HCT116 (cell line): ENCODE measurements at regions of chr1 and their contacts with region 1.

Region 1: DNA sequence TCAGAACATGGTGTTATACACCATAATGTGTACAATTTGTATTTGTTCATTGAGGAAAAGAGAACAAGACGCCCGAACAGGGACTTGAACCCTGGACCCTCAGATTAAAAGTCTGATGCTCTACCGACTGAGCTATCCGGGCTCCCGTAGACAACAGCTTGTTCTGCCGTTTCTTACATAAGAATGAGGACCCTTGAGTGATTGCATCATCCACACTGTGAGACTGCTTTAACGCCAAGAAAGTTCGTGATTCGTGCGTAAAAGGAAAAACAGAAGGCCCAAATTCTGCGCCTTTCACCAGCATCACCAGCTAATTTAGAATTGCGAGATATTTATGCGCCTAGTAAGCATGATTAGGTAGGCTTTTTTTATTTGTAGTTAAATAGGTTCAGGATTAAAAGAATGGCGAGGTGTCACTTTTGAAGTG is 9.2 kb upstream of the MDM4 start:
- DNase-seq: peak; percentile 87
- ATAC-seq: peak; percentile 82
- H3K4me3 ChIP-seq: peak overlapping the region; percentile 7 to 38; a peak in 3 of 4 replicates
- H3K27ac ChIP-seq: peak overlapping the region; percentile 60
- H3K4me1 ChIP-seq: peaks cover 30 to 47% of the 10 kb centered on the region in 2 experiments
- H3K27me3 ChIP-seq: no peaks in the 10 kb centered on the region
- CTCF ChIP-seq: no peak
- POLR2A ChIP-seq: no peak
- RAD21 ChIP-seq: no peak

Region 2: DNA sequence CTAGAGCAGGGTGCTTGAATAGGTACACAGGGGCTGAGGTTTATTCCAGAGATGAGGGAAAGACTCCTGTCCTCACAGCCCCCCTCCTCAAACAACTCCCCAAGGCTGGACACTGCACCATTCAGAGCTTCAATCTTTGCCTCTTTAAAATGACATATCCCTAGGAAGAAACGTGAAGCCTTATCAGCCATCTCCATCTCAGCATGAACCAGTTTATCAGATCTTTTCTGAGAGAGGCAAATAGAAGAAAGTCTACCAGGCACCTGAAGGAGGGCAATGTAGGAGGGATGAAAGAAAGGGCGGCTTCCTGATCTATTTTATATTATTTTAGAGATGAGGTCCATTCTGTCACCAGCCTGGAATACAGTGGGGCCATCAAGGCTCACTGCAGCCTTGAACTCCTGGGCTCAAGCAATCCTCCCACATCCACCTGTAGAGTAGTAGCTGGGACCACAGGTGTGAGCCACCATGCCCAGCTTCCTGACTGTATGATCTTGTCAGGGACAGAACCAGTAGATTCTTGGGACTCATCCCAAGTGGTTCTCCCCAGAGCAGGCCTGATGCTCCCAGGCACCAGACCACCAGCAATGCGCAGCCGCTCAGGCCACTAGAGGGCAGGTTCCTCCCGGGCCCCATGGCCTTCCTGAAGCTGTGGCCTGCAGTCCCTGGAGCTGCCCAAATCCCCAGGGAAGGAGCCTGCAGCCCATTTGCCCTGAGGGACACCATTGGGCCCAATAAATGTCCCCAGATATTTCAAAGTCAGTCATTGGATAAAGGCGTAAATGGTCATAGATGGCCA is 248.8 kb before region 1 on chr1:
- CTCF ChIA-PET with region 1: interaction called, 6 read pairs
- POLR2A ChIA-PET with region 1: no interaction called
- RAD21 ChIA-PET with region 1: no interaction called
- intact Hi-C with region 1: loop called (anchors 1 kb)
- DNase-seq: peak; percentile 37
- ATAC-seq: peak; percentile 97
- H3K4me3 ChIP-seq: no peak overlapping the region
- H3K27ac ChIP-seq: no peak overlapping the region
- H3K4me1 ChIP-seq: no peaks in the 10 kb centered on the region
- H3K27me3 ChIP-seq: no peaks in the 10 kb centered on the region
- CTCF ChIP-seq: peak; percentile 85 to 93 (median 91)
- POLR2A ChIP-seq: no peak
- RAD21 ChIP-seq: peak; percentile 88

Region 3: DNA sequence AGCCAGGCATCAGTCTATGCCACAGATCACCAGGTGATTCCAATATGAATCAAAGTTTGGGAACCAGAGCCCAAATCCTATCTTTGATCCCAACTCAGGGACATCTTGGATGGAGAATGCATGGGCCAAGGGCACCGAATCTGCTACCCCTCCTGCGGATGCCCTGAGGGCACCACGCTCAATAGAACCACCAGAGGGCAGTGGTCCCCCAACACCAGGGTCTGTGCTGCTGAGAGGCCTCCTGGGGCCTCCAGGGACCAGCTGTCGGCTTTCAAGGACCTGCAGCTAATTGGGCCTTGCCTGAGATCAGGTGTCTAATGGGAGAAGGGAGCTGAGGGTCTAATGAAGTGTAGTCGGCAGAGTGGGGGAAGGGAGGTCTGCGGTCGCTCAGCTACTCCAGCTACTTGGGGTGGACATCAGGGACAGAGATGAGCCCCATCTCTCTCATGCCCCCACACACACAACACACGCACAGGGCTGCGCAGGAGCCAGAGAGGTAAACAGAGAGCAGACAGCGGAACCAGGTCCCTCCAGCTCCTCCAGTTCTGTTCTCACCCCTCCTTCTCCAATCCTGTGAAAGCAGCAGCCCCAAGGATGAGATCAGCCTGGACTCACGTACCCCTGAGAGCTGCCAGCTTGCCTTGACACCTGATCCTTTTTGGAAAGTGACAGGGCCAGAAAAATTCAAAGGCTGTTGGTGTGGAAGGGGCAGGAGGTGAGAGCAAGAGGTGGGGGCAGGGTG is 60.4 kb before region 1 on chr1:
- CTCF ChIA-PET with region 1: interaction called, 33 read pairs
- POLR2A ChIA-PET with region 1: no interaction called
- RAD21 ChIA-PET with region 1: interaction called, 5 to 7 read pairs
- intact Hi-C with region 1: loop called (anchors 1 kb)
- DNase-seq: no peak
- ATAC-seq: peak; percentile 87
- H3K4me3 ChIP-seq: no peak overlapping the region
- H3K27ac ChIP-seq: no peak overlapping the region
- H3K4me1 ChIP-seq: peaks cover 17 to 45% of the 10 kb centered on the region in 2 experiments
- H3K27me3 ChIP-seq: no peaks in the 10 kb centered on the region
- CTCF ChIP-seq: peak; percentile 70 to 87 (median 76)
- POLR2A ChIP-seq: no peak
- RAD21 ChIP-seq: peak; percentile 88

Region 4: DNA sequence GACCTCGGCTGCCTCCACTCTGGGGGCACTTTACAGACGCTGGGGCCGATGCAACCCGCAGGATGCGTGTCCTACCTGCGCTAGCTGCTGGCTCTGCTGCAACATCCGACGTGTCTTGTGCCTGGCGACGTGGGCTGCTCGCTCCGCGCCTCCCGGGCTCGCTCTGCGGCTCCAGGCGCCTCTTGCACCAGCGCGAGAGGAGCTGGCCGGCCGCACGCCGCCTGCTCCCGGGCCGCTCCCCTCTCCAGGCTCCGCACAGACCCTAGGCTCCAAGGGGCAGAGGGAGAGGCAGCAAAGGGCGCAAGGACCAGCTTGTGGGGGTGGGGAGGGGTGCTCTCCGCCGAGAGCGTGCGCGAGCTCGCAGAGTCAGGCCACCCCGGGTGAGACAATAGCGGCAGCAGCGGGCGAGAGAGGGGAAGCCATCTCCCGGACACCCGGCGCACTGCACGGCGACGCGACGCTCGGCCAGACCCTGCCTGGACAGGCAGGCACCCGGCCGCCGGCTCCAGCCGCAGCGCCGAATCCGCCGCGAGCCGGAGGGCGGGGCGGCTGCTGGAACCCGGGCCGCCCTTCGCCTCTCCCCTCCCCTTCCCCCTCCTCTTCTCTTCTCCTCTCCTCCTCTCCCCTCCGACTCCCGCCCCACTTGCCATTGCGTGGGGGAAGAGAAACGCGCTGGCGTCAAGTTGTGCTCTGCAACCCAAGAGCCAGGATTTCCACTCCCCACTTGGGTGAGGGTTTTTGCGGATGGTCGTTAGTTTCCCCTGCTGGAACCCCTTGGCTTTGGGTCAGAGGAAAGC is 12.5 kb before region 1 on chr1 and contains the start of gene PIK3C2B:
- CTCF ChIA-PET with region 1: interaction called, 17 read pairs
- POLR2A ChIA-PET with region 1: interaction called, 14 read pairs
- RAD21 ChIA-PET with region 1: interaction called in 1 of 2 experiments, 3 read pairs
- intact Hi-C with region 1: no loop called
- DNase-seq: peak; percentile 52
- ATAC-seq: peak; percentile 87
- H3K4me3 ChIP-seq: peak within 1 kb of the TSS; percentile 80 to 94
- H3K27ac ChIP-seq: peak within 1 kb of the TSS; percentile 97
- H3K4me1 ChIP-seq: peaks cover 17 to 36% of the 10 kb centered on the region in 2 experiments
- H3K27me3 ChIP-seq: no peaks in the 10 kb centered on the region
- CTCF ChIP-seq: peak in 2 of 3 experiments; percentile 25 to 29; a peak in 3 of 6 replicates
- POLR2A ChIP-seq: peak; percentile 68
- RAD21 ChIP-seq: peak; percentile 36; the same call in 1 of the 2 replicates
- total RNA-seq, gene PIK3C2B: 17.4 TPM